ENCODE measurements at regions of chr5 and their contacts with region 1.

Region 1: DNA sequence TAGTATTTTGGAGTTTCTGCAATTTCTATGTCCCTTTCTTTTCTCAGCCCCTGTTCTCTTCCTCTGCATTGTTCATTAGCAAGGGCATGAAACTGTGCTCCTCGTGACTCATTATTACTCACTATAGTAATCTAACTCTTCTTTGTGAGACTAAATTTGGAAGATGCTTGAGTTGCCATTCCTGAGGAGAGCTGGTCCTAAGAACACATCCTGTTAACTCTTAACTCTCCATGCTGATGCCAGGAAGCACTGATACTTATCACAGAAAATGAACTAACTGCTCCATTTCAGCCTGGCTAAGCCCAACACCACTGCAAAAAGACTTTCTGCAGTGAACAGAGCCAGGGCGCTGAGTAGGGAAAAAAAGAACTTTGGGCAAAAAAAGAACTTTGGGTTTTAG is 10.6 kb upstream of the CSNK1A1 start:
- DNase-seq: no peak
- ATAC-seq: peak; percentile 89
- H3K4me3 ChIP-seq: no peak overlapping the region
- H3K27ac ChIP-seq: peak overlapping the region in 1 of 2 donors; percentile 91
- H3K4me1 ChIP-seq: no peaks in the 10 kb centered on the region
- H3K27me3 ChIP-seq: no peaks in the 10 kb centered on the region

Region 2: GRCh38 chr5:148998174-148998797 is 563.6 kb before region 1 on chr5:
- intact Hi-C with region 1: no loop called
- DNase-seq: no peak
- ATAC-seq: peak; percentile 64
- H3K4me3 ChIP-seq: no peak overlapping the region
- H3K27ac ChIP-seq: no peak overlapping the region
- H3K4me1 ChIP-seq: peaks cover 0 to 1% of the 10 kb centered on the region in 2 donors
- H3K27me3 ChIP-seq: no peaks in the 10 kb centered on the region

Region 3: DNA sequence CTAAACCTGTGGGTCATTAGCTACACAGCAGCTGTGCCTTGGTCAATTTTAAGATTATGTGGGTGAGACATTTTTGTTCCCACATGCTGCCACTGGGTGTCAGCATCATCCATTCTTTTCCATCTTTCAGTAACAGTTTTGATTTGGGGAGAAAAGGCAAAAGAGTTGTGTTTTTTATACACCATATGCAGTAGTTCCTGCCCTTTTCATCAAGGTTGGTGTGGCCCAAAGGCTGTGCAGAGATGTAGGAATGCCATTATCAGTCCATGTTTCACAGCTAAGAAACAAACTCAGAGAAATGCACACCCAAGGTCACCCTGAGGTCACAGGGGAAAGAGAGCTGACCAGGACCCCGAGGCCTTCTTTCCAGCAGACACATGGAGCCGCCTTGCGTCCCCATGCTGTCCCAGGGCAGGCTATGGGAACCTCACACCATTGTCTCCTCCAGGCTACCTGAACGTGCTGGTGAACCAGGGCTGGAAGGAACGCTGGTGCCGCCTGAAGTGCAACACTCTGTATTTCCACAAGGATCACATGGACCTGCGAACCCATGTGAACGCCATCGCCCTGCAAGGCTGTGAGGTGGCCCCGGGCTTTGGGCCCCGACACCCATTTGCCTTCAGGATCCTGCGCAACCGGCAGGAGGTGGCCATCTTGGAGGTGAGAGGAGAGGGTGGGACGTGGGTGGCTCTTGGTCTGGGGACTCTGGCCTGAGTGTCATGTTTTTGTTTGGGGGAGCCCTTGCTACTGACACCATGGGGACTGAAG is 244.4 kb before region 1 on chr5:
- intact Hi-C with region 1: loop called (anchors 5 to 10 kb)
- DNase-seq: no peak
- ATAC-seq: no peak
- H3K4me3 ChIP-seq: no peak overlapping the region
- H3K27ac ChIP-seq: no peak overlapping the region
- H3K4me1 ChIP-seq: no peaks in the 10 kb centered on the region
- H3K27me3 ChIP-seq: no peaks in the 10 kb centered on the region

Region 4: GRCh38 chr5:149367249-149367971 is 194.4 kb before region 1 on chr5:
- intact Hi-C with region 1: loop called (anchors 5 kb)
- DNase-seq: peak; percentile 76 to 85
- ATAC-seq: peak; percentile 67
- H3K4me3 ChIP-seq: no peak overlapping the region
- H3K27ac ChIP-seq: peak overlapping the region in 1 of 2 donors; percentile 35
- H3K4me1 ChIP-seq: peaks cover 0 to 3% of the 10 kb centered on the region in 2 donors
- H3K27me3 ChIP-seq: no peaks in the 10 kb centered on the region

Region 5: GRCh38 chr5:149442563-149443182 is 119.2 kb before region 1 on chr5:
- intact Hi-C with region 1: loop called (anchors 1 to 2 kb)
- DNase-seq: peak; percentile 83 to 96
- ATAC-seq: peak; percentile 85
- H3K4me3 ChIP-seq: no peak overlapping the region
- H3K27ac ChIP-seq: peak overlapping the region in 1 of 2 donors; percentile 15
- H3K4me1 ChIP-seq: no peaks in the 10 kb centered on the region
- H3K27me3 ChIP-seq: no peaks in the 10 kb centered on the region

Region 6: GRCh38 chr5:149526845-149527580 is 34.8 kb before region 1 on chr5:
- intact Hi-C with region 1: no loop called
- DNase-seq: peak in 1 of 2 donors; percentile 46
- ATAC-seq: no peak
- H3K4me3 ChIP-seq: no peak overlapping the region
- H3K27ac ChIP-seq: no peak overlapping the region
- H3K4me1 ChIP-seq: peaks cover 2 to 10% of the 10 kb centered on the region in 2 donors
- H3K27me3 ChIP-seq: no peaks in the 10 kb centered on the region

Region 7: GRCh38 chr5:149551200-149552037 is 10.4 kb before region 1 on chr5 and contains the start of gene CSNK1A1:
- intact Hi-C with region 1: no loop called
- DNase-seq: peak; percentile 99
- ATAC-seq: peak; percentile 98
- H3K4me3 ChIP-seq: peak within 1 kb of the TSS; percentile 78 to 90
- H3K27ac ChIP-seq: peak within 1 kb of the TSS; percentile 84 to 95
- H3K4me1 ChIP-seq: no peaks in the 10 kb centered on the region
- H3K27me3 ChIP-seq: no peaks in the 10 kb centered on the region
- total RNA-seq, gene CSNK1A1: 226 to 242 TPM

Measured in aorta (tissue), 5 donors.